ENCODE measurements at regions of chr1 and their contacts with region 1.

Region 1: DNA sequence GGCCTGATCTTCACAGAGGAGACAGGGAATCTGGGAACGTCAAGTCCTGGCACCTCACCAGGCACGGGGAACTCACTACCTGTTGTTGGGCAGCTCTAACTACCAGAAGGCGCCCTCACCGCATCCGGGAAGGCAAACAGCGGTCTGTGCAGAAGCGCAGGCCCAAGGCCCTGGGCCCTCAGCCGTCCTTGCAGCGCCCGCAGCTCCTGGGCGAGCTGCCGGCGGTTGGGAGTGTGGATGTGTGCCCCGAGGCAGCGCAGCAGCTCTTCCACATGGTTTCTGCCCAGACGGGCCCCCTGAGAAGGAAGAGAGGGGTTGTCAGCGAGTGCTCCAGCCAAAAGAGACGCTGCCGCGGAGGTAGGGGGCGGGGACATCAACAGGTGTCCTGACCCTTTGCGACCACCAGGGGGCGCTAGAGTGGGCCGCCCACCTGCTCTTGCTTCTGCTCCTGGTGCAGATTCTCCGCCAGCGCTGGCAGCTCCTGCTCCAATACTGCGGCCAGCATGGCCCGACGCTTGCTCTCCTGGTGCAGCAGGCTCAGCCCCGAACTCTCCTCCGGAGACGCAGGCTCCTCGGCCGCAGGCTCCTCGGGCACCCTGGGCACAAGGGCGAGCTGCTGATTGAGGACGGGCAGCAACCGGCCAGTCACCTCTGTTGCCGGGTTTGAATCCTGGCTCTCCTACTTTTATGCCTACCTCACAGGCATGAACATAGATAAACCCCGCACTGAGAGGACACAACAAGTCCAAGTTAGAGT is 9.3 kb downstream of the MAP3K6 start:
- DNase-seq: peak; percentile 78
- ATAC-seq: peak; percentile 67 to 83

Region 2: DNA sequence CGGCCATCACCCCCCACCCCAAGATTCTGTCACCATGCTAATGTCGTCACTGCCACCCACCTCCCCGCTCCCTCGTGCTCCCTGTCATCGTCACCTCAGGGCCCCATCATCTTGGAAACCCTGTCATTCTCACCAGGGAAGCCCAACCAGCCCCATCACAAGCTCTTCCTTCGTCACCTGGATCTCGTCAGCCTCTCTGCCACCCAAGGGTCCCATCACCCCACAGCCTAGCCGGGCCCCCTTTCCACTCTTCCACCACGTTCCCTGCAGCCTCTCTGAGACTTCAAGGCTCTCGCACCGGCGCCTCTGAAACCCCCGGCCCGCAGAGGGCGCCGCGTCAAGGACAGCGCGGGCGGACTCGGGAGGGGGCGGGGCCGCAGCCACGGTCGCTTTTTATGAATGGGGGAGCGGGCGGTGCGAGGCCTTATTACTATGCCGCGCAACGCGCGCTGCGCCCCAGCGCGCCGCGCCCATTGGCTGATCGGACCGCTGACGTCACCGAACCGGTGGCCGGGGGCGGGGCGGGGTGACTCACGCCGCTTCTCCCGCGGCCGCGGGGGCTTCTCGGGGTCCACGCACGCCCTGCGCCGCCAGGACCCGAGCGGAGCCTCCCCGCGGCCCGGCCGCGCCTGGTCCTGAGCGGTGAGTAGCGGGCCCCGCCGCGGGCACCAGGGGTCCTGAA is 34.8 kb after region 1 on chr1 and contains the start of gene GPR3:
- intact Hi-C with region 1: loop called in 1 of 2 experiments (anchors 5 kb)
- DNase-seq: peak; percentile 95
- ATAC-seq: peak; percentile 94
- total RNA-seq, gene GPR3: 1.7 to 12.4 TPM